ENCODE measurements at regions of chr4 and their contacts with region 1.

Region 1: GRCh38 chr4:112938461-112939058 is 110.9 kb upstream of the ANK2 start:
- DNase-seq: peak; percentile 38
- H3K4me3 ChIP-seq: no peak overlapping the region
- H3K27ac ChIP-seq: peak overlapping the region in 1 of 2 experiments; percentile 45; a peak in 1 of 4 replicates
- H3K4me1 ChIP-seq: peaks cover 0 to 19% of the 10 kb centered on the region in 2 experiments; a peak in 1 of 4 replicates
- H3K27me3 ChIP-seq: no peaks in the 10 kb centered on the region
- CTCF ChIP-seq: peak; percentile 91
- EP300 ChIP-seq: no peak
- RAD21 ChIP-seq: peak; percentile 88

Region 2: DNA sequence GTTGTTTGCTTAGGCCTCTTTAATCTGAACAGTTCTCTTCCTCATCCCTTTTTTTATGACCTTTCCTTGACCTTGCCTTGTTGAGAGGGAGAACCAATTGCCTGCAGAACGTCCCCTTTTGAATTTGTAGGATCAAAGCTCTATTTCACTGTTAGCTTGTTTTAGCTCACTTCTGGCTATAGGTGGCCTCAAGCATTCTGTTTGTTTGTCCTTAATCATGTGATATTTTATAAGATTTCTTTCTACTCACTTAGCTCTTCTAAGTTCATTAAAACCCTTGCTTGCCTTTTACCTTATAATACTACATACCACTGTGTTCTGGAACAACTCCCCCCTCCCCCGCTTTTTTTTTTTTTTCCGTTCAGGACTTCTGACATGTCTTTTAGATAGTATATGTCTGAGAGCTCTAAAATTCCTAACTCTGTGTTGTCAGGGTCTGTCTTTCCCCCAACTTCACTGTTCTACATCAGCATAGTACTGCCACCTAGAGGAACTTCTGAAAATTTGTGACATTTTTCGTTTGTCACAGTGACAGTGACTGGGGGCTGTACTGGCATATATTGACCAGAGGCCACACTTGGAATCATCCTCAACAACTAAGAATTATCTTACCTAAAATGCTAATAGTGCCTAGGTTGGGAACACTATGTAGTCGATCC is 173.1 kb before region 1 on chr4:
- CTCF ChIA-PET with region 1: interaction called, 79 read pairs
- POLR2A ChIA-PET with region 1: no interaction called
- DNase-seq: peak; percentile 71
- H3K4me3 ChIP-seq: no peak overlapping the region; a peak in 1 of 4 replicates
- H3K27ac ChIP-seq: no peak overlapping the region
- H3K4me1 ChIP-seq: no peaks in the 10 kb centered on the region
- H3K27me3 ChIP-seq: no peaks in the 10 kb centered on the region
- CTCF ChIP-seq: peak; percentile 65
- EP300 ChIP-seq: no peak
- RAD21 ChIP-seq: peak; percentile 76

Region 3: GRCh38 chr4:112842513-112842912 is 96.0 kb before region 1 on chr4:
- CTCF ChIA-PET with region 1: interaction called, 14 read pairs
- POLR2A ChIA-PET with region 1: no interaction called
- DNase-seq: no peak
- H3K4me3 ChIP-seq: no peak overlapping the region
- H3K27ac ChIP-seq: no peak overlapping the region
- H3K4me1 ChIP-seq: no peaks in the 10 kb centered on the region
- H3K27me3 ChIP-seq: no peaks in the 10 kb centered on the region
- CTCF ChIP-seq: no peak
- EP300 ChIP-seq: no peak
- RAD21 ChIP-seq: no peak

Region 4: GRCh38 chr4:112895811-112896608 is 42.5 kb before region 1 on chr4:
- CTCF ChIA-PET with region 1: interaction called, 17 read pairs
- POLR2A ChIA-PET with region 1: no interaction called
- DNase-seq: no peak
- H3K4me3 ChIP-seq: no peak overlapping the region
- H3K27ac ChIP-seq: peak overlapping the region; percentile 14 to 99; a peak in 3 of 4 replicates
- H3K4me1 ChIP-seq: peaks cover 0 to 28% of the 10 kb centered on the region in 2 experiments; a peak in 3 of 4 replicates
- H3K27me3 ChIP-seq: no peaks in the 10 kb centered on the region
- CTCF ChIP-seq: no peak
- EP300 ChIP-seq: no peak
- RAD21 ChIP-seq: no peak

Region 5: DNA sequence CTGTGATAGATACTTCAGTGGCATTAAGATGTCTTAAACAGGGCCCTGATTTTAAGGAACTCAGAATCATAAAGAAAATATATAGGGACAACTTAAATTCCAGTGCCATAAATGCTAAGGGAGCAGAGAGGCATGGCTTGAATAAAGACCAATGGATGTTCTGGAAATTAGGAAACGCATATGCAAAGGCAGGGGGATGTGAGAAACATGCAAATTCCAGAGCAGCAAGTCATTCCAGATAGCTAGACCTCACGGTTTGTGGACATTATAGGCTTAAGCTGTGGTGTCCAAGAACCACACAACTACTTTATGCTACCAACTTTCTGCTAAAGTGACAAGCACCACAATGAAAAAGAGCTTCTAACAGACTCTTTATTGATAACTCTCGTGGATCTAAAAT is 21.7 kb before region 1 on chr4:
- CTCF ChIA-PET with region 1: interaction called, 27 read pairs
- POLR2A ChIA-PET with region 1: no interaction called
- DNase-seq: no peak
- H3K4me3 ChIP-seq: no peak overlapping the region
- H3K27ac ChIP-seq: no peak overlapping the region
- H3K4me1 ChIP-seq: no peaks in the 10 kb centered on the region
- H3K27me3 ChIP-seq: no peaks in the 10 kb centered on the region
- CTCF ChIP-seq: no peak
- EP300 ChIP-seq: no peak
- RAD21 ChIP-seq: no peak

Region 6: GRCh38 chr4:112951362-112952312 is 13.1 kb after region 1 on chr4:
- CTCF ChIA-PET with region 1: interaction called, 23 read pairs
- POLR2A ChIA-PET with region 1: no interaction called
- DNase-seq: peak; percentile 36
- H3K4me3 ChIP-seq: no peak overlapping the region; a peak in 1 of 4 replicates
- H3K27ac ChIP-seq: no peak overlapping the region; a peak in 1 of 4 replicates
- H3K4me1 ChIP-seq: peaks cover 0 to 9% of the 10 kb centered on the region in 2 experiments; a peak in 3 of 4 replicates
- H3K27me3 ChIP-seq: no peaks in the 10 kb centered on the region
- CTCF ChIP-seq: peak; percentile 79
- EP300 ChIP-seq: no peak
- RAD21 ChIP-seq: peak; percentile 26; the same call in 1 of the 2 replicates

Region 7: GRCh38 chr4:112978691-112979472 is 40.3 kb after region 1 on chr4:
- CTCF ChIA-PET with region 1: no interaction called
- POLR2A ChIA-PET with region 1: no interaction called
- DNase-seq: no peak
- H3K4me3 ChIP-seq: no peak overlapping the region
- H3K27ac ChIP-seq: no peak overlapping the region
- H3K4me1 ChIP-seq: peaks cover 5 to 18% of the 10 kb centered on the region in 2 experiments; a peak in 3 of 4 replicates
- H3K27me3 ChIP-seq: no peaks in the 10 kb centered on the region
- CTCF ChIP-seq: no peak
- EP300 ChIP-seq: no peak
- RAD21 ChIP-seq: no peak

Region 8: GRCh38 chr4:113411496-113411938 is 473.0 kb after region 1 on chr4:
- CTCF ChIA-PET with region 1: no interaction called
- POLR2A ChIA-PET with region 1: no interaction called
- DNase-seq: no peak
- H3K4me3 ChIP-seq: no peak overlapping the region
- H3K27ac ChIP-seq: no peak overlapping the region
- H3K4me1 ChIP-seq: no peaks in the 10 kb centered on the region
- H3K27me3 ChIP-seq: no peaks in the 10 kb centered on the region
- CTCF ChIP-seq: no peak
- EP300 ChIP-seq: no peak
- RAD21 ChIP-seq: no peak